ENCODE measurements at regions of chr19 and their contacts with region 1.

Region 1: DNA sequence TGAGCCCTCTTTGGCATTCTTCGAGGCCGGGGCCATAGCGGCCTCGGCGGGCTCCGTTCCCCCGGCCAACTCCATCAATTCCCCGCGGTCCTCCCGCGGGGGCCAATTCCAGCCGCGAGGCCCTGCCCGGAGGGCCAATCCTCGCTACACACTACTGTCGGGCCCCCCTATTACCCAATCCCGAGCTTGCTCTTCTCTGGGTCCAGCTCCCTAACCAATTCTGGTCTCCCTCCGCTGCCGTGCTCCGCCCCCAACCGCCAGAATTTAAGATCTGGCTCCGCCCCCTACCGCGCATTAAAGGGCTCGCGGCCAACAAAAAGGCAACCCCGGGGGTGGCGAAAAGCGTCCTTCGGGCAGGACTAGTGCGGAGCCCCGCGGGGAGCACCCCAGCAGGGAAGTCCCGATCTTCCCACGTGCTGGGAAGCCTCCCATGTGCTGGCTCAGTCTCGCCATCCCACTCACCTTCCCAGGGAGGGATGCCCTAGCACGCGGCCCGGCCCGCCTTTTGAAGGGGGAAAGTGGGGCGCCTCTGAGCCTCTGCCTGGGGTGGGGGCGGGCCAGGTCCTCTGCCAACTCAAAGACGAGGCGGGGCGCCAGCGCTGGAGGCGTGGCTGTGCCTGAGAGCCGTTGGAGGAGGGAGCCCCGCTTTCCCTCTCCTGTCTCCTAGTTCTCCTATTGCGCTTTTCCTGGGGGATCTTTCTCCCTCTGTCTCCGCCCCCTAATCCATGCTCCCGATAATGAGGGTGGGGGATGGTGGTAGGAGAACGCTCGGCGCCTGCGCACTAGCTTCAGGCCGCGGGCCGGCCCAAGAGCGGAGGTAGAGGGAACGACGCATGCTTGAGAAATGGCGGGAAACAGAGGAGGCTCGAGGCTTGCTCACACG is 3.5 kb downstream of the LIPE start:
- DNase-seq: peak; percentile 95
- H3K4me3 Mint-ChIP-seq: peak overlapping the region; percentile 87
- H3K27ac Mint-ChIP-seq: peak overlapping the region; percentile 85
- H3K4me1 Mint-ChIP-seq: peaks cover 42% of the 10 kb centered on the region
- H3K27me3 Mint-ChIP-seq: peaks cover 4% of the 10 kb centered on the region

Region 2: DNA sequence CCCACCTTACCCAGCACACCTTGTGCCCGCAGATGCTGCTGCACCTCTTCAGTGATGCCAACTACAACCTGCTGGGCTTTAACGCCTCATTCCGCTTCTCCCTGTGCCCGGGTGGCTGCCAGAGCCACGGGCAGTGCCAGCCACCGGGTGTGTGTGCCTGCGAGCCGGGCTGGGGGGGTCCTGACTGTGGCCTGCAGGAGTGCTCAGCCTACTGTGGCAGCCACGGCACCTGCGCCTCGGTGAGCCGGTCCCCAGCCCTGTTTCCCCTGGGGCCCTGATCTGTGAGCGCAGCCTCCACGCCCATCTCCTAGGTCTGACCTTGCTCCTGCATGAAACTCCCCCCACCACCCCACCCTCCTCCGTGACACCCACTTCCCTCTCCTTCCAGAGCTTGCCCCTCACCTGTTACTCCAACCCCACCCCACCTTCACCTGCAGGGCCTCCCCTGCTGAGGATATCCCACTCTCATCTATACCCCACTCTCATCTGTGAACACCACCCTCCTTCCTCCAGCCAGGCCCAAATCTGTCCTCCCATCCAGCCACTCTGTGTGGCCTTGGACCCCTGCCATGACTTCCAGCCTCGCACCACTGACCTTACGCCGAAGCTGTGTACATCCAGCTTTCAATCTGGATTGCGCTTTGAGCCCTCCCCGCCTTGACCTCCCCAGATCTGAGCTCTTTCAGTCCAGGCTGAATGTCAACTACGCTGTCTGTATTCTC is 89.6 kb before region 1 on chr19:
- CTCF ChIA-PET with region 1: no interaction called
- POLR2A ChIA-PET with region 1: no interaction called
- DNase-seq: no peak
- H3K4me3 Mint-ChIP-seq: no peak overlapping the region
- H3K27ac Mint-ChIP-seq: no peak overlapping the region
- H3K4me1 Mint-ChIP-seq: peaks cover under 1% of the 10 kb centered on the region
- H3K27me3 Mint-ChIP-seq: no peaks in the 10 kb centered on the region

Region 3: DNA sequence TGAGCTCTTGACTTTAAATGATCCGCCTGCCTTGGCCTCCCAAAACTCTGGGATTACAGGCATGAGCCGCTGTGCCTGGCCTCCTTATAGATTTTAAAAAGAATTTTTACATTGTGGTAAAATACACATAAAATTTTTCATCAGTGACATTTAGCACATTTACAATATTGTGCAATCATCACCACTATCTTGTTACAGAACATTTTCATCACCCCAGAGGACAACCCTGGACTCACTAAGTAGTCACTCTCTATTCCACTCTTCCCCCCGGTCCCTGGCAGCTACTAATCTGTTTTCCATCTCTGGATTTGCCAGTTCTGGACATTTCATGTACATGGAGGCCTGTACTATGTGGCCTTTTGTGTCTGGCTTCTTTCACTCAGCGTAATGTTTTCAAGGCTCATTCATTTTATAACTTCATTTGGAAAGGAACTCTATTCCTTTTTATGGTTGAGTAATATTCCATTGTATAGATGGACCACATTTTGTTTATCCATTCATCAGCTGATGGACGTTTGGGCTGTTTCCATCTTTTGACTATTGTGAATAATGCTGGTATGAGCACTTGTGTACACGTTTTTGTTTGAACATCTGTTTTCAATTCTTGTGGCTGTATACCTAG is 78.4 kb before region 1 on chr19:
- CTCF ChIA-PET with region 1: no interaction called
- POLR2A ChIA-PET with region 1: no interaction called
- DNase-seq: no peak
- H3K4me3 Mint-ChIP-seq: no peak overlapping the region
- H3K27ac Mint-ChIP-seq: no peak overlapping the region
- H3K4me1 Mint-ChIP-seq: no peaks in the 10 kb centered on the region
- H3K27me3 Mint-ChIP-seq: no peaks in the 10 kb centered on the region

Region 4: DNA sequence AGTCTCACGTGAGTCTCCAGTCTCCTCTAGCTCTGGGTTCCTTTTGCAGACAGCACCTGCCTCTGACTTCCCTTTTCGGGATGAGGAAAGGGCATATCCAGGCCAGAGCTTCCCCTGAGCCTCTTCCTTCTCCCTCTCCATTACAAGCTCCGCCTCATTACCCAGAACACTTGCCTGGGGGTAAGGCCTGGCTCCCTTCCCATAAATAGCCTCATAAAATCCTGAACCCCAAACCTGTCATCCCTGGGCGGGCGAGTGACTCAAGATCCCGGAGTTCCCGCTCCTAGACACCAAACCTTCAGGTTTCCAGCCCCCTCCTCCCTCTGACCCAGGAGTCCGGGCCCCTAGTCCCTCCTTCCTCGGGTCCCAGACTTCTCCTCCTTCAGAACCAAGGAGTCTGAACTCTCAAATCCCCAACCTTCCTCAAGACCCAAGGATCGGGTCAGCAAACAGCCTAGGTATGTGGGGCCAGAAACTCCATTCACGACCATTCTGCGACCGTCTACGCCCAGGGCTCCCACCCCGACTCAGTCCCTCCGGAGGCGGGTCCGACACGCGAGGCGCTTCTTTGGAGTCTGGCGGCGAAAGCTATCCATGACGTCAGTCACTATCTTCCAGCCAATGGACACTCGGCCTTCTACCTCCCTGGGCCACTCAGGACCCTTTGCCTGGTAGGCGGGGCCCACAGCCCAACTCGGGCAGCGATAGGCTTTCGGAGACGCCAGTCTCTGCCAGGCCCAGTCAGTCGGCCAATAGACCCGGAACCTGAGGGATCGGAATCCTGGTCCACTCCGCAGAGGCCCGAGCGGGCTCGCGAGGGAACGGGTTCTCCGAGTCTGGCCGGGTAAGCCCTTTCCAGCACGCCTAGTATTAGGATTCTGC is 27.1 kb before region 1 on chr19:
- CTCF ChIA-PET with region 1: interaction called, 14 read pairs
- POLR2A ChIA-PET with region 1: interaction called, 7 read pairs
- DNase-seq: peak; percentile 98
- H3K4me3 Mint-ChIP-seq: peak overlapping the region; percentile 92
- H3K27ac Mint-ChIP-seq: peak overlapping the region; percentile 76
- H3K4me1 Mint-ChIP-seq: peaks cover 36% of the 10 kb centered on the region
- H3K27me3 Mint-ChIP-seq: peaks cover 8% of the 10 kb centered on the region

Region 5: DNA sequence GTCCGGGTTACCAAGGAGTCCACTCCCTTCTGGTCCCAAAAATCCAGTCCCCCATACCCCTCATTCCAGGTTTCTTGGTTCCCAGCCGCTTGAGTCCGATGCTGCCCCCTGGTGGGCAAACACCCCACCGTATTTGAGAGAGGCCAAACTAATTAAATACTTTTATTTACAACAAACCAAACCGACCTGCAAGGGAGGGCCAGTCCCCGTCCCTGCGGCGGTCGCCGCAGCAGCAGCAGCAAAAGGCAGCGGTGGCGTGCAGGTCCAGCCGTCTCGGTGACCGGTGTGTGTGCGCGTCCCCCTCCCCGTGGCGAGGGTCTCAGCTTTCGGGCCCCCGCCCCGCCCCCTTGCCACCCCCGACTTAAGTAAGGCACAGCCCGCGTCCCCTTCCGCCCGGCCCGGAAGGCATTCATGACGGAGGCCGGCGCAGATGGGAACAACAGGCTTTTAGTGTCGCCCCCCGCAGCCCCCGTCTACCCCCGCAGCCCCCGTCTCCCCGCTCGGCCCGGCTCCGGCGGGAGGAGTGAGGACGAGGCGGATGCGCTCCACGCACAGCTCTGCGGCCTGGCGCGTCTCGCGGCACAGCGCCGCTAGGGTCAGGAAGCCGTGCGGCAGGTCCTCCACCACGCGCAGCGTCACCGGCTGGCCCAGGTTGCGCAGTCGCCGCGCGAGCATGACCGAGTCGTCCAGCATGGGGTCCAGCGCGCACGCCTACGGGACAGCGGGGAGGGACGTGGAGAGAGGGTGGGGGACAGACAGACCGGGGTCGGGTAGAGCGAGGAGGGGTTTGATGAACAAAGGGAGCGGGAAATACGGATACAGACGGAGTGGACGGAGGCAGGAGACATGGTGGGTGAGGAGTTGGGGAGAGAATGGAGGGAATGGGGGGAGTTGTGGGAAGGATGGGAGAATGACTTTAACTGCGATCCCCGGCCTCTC is 22.1 kb before region 1 on chr19:
- CTCF ChIA-PET with region 1: interaction called, 14 read pairs
- POLR2A ChIA-PET with region 1: interaction called, 7 read pairs
- DNase-seq: peak; percentile 71
- H3K4me3 Mint-ChIP-seq: peak overlapping the region; percentile 64
- H3K27ac Mint-ChIP-seq: peak overlapping the region; percentile 10
- H3K4me1 Mint-ChIP-seq: peaks cover 36% of the 10 kb centered on the region
- H3K27me3 Mint-ChIP-seq: no peaks in the 10 kb centered on the region

Region 6: DNA sequence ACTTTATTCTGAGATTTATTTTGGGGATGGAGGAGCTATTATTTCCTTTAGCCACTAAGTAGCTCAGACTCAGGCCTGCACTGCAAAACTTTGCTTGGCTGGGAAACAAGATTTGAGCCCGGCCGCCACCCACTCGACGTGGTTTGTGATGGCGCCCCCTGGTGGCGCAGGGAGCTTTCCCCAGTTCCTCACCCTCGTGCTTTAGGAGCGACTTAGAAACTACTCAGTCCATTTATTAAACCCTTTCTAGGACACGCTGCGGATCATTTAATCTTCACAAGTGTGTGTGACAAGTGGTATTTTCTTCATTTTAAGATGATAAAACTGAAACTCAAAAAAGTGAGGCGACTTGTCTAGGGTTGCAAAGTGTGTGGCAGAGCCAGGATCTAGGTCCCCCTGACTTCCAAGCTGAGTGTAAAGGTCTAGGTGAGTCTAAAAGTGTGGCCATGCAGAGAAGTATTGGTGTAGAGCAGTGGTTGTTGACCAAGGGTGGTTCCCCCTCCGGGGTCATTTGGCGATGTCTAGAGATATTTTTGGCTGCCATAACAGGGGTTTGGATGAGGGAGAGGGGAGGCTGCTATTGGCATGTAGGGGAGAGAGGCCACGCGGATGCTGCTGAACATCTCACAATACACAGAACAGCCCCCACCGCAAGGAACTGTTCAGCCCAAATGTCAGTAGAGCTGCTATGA is 16.8 kb after region 1 on chr19:
- CTCF ChIA-PET with region 1: interaction called, 35 read pairs
- POLR2A ChIA-PET with region 1: interaction called, 20 read pairs
- DNase-seq: peak; percentile 84
- H3K4me3 Mint-ChIP-seq: no peak overlapping the region
- H3K27ac Mint-ChIP-seq: peak overlapping the region; percentile 25
- H3K4me1 Mint-ChIP-seq: peaks cover 29% of the 10 kb centered on the region
- H3K27me3 Mint-ChIP-seq: peaks cover 5% of the 10 kb centered on the region

Region 7: DNA sequence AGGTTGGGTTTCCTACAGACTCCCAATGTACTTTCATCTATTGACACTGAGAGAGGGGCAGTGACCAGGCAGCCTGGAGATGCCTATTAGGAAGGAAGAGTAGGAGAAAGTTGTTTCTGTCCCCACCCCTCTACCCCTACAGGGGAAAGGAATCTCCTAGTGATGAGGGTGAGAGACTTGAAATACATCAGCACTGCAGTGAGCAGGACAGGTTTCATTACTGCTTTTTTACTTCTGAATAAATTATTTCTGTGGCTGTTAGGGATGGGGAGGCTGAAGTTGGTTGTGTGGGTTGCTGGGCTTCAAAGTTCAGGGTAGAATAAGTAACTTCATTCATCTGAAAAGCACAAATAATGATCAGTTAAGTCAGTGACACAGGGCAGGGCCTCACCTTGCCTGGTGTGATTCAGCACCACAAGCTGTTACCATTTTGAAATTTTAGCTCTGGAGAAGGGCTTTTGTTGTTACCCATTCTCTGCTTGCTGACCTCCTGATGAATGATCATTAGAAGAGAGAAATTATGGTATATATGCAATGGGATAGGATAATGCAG is 85.3 kb after region 1 on chr19:
- CTCF ChIA-PET with region 1: no interaction called
- POLR2A ChIA-PET with region 1: no interaction called
- DNase-seq: no peak
- H3K4me3 Mint-ChIP-seq: no peak overlapping the region
- H3K27ac Mint-ChIP-seq: no peak overlapping the region
- H3K4me1 Mint-ChIP-seq: peaks cover 48% of the 10 kb centered on the region
- H3K27me3 Mint-ChIP-seq: no peaks in the 10 kb centered on the region